ENCODE measurements at regions of chr21 and their contacts with region 1.

Region 1: DNA sequence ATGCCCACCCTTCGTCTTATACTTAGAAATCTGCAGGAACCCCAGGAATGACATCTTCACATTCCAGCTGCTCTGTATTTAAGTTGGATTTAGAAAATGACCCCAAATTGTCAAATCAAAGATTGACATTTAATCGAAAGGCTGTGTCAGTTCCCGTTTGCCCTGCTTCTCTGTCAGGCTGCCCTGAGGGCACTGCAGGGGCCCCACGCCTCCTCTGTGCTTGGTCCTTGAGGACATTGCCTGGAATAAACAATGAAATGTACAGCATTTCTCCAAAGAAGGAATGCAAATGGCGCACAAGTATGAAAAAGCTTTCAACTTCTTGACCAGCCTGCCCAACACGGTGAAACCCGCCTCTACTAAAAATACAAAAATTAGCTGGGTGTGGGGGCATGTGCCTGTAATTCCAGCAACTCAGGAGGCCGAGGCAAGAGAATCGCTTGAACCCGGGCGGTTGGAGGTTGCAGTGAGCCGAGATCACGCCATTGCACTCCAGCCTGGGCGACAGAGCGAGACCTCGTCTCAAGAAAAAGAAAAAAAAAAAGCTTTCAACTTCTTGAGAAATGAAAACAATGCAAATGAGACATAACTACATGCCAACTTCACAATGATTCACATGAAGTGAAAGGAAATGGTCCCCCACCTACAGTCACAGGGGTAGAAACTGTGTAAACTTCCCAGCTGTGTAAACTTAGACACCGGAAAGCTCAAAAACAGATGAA is 3.0 kb downstream of the TMPRSS3 start:
- DNase-seq: no peak
- H3K4me3 Mint-ChIP-seq: peak overlapping the region; percentile 65
- H3K27ac Mint-ChIP-seq: peak overlapping the region; percentile 82
- H3K4me1 Mint-ChIP-seq: peaks cover 72% of the 10 kb centered on the region
- H3K27me3 Mint-ChIP-seq: no peaks in the 10 kb centered on the region

Region 2: GRCh38 chr21:42337830-42338728 is 54.8 kb before region 1 on chr21:
- intact Hi-C with region 1: loop called (anchors 5 kb)
- DNase-seq: peak; percentile 66
- H3K4me3 Mint-ChIP-seq: no peak overlapping the region
- H3K27ac Mint-ChIP-seq: peak overlapping the region; percentile 15
- H3K4me1 Mint-ChIP-seq: peaks cover 12% of the 10 kb centered on the region
- H3K27me3 Mint-ChIP-seq: peaks cover 28% of the 10 kb centered on the region

Region 3: DNA sequence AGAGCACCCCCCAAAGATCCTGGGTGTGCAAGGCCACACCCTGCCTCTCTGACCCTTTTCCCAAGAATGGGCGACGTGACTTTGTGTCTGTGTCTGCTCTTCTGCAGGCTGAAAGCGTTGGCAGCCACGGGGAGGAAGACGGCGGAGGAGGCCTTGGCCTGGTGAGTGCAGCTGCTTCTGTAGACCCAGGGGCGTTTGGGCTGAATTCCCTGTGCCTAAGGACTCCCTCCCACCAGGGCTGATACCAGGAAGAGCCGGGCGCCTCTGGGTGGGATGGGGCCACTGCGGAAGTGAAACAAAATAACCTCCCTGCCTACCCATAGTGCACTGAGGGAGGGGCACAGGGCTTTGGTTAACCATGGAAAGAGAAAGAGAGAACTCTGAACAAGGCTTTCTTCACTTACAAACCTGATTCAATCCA is 13.3 kb after region 1 on chr21:
- intact Hi-C with region 1: loop called (anchors 1 kb)
- DNase-seq: peak; percentile 59
- H3K4me3 Mint-ChIP-seq: peak overlapping the region; percentile 92
- H3K27ac Mint-ChIP-seq: peak overlapping the region; percentile 94
- H3K4me1 Mint-ChIP-seq: peaks cover 58% of the 10 kb centered on the region
- H3K27me3 Mint-ChIP-seq: no peaks in the 10 kb centered on the region

Region 4: DNA sequence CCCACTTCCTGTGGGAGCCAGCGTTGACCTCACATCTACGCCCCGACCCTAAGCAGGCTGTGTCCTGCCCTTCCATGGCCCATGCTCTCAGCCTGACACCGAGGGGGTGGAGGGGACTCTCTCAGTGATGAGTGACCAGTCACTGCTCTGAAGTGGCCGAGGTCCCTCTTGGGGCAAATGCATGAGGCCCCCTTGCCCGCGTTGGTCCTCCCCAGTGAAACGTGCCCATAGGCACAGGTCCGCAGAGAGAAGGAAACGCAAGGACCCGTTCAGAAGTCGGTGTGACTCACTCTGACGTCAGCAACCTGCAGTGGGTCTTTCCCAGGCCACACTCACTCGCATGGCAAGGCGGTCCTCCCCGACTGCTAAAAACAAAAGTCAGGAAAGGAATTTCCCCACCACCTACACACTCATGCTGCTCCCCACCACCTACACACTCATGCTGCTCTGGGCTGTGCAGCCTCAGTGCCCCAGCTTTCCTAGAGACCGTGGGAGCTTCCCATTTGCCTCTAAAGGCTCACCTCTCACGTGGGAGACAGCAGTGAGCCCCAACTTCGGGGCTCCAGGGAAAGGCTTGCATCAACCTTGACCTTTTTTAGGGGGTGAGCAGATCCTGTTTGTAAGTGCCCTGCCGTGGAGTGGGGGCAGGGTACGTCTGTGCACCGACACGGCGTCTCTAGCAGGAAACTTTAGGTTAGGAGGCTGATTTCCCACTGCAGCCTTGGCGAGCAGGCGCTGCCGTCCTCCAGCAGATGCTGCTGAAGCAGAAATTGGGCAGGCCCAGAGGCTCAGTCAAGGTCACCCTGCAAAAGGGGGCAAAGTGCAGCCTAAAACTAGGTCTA is 22.3 kb after region 1 on chr21:
- intact Hi-C with region 1: loop called (anchors 1 kb)
- DNase-seq: peak; percentile 88
- H3K4me3 Mint-ChIP-seq: peak overlapping the region; percentile 73
- H3K27ac Mint-ChIP-seq: peak overlapping the region; percentile 98
- H3K4me1 Mint-ChIP-seq: peaks cover 66% of the 10 kb centered on the region
- H3K27me3 Mint-ChIP-seq: no peaks in the 10 kb centered on the region

Region 5: GRCh38 chr21:42424914-42425541 is 32.1 kb after region 1 on chr21:
- intact Hi-C with region 1: loop called (anchors 1 kb)
- DNase-seq: peak; percentile 74
- H3K4me3 Mint-ChIP-seq: peak overlapping the region; percentile 76
- H3K27ac Mint-ChIP-seq: peak overlapping the region; percentile 95
- H3K4me1 Mint-ChIP-seq: peaks cover 67% of the 10 kb centered on the region
- H3K27me3 Mint-ChIP-seq: no peaks in the 10 kb centered on the region

Region 6: DNA sequence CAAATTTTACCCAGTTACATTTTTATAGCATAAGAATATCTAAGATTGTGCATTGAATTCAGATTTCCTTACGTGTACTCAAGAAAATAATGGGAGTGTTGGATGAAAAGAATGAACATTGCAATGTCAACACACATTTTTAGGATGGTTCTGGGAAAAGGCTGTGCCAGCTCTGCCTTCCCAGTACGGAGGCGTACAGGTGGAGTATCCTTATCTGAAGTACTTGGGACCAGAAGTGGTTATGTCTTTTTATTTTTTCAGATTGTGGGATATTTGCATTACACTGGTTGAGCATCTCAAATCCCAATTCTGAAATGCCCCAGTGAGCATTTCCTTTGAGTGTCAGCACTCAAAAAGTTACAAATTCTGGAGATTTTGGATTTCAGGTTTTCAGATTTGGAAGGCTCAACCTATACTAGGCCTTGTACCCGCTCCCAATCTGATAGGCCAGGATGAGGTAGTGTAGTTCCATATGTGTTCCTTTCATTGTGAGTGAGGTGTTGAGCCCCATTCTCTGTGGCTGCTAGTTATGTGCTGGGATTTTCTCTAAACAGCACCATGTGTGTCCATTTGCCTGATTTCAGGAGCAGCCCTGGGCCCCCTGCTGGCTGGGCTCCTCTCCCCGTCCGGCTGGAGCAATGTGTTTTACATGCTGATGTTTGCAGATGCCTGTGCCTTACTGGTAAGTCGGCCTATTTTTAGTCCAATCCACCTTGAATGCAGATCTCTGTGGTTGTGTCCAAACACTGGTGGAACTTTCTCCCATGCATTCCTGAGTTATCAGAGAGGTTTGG is 181.5 kb after region 1 on chr21:
- intact Hi-C with region 1: no loop called
- DNase-seq: no peak
- H3K4me3 Mint-ChIP-seq: no peak overlapping the region
- H3K27ac Mint-ChIP-seq: no peak overlapping the region
- H3K4me1 Mint-ChIP-seq: no peaks in the 10 kb centered on the region
- H3K27me3 Mint-ChIP-seq: no peaks in the 10 kb centered on the region

Measured in activated T-helper 1 cell treated with anti-CD3 and anti-CD28 coated beads, Interleukin-12 subunit alpha, Interleukin-12 subunit beta, Interleukin-2, Interleukin-4 antibody, amounts not matched to agents 30 ng/mL and 10 ng/mL and 1 ng/mL, durations not matched to agents 14 hours and 24 hours and 36 hours (primary cell).